H1 (cell line): ENCODE measurements at regions of chr1 and their contacts with region 1.

Region 1: DNA sequence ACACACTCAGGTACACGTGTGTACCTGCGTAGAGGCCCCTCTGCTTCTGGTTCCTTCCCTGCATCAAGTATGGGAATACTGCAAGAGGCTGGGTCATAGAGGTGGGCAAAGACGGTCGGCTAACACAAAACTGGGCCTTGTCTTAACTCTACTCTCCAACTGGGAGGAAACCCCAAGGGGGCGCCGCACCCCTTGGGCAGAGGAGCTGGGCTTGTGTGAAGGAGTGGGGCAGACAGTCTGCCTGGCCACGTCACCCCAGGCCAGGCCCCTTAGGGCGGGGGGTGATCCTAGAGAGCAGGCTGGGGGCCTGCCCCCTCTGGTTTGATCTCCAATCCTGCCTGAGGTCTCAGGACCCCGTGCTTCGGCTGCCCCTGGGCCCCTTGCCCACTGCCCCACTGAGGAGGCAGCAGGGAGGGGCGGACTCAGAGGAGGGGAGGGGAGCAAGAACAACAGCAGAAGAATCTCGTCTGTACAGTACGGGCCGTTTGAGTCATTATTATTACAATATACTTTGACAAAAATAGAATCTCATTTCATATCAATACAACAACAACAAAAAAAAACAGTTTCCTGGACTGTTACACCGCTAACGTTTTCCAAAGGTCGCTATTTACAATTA is 34.7 kb downstream of the MEF2D start:
- DNase-seq: peak in 1 of 2 experiments; percentile 73
- H3K4me3 ChIP-seq: no peak overlapping the region
- H3K27ac ChIP-seq: no peak overlapping the region
- H3K4me1 ChIP-seq: peaks cover 0 to 18% (median 8%) of the 10 kb centered on the region in 4 experiments; a peak in 5 of 7 replicates
- H3K27me3 ChIP-seq: no peaks in the 10 kb centered on the region; a peak in 1 of 7 replicates
- CTCF ChIP-seq: peak; percentile 66 to 68 (median 68)
- EP300 ChIP-seq: no peak
- POLR2A ChIP-seq: no peak
- RAD21 ChIP-seq: peak; percentile 66 to 78

Region 2: GRCh38 chr1:156489166-156489934 is 23.5 kb after region 1 on chr1:
- CTCF ChIA-PET with region 1: interaction called, 62 read pairs
- POLR2A ChIA-PET with region 1: interaction called, 5 read pairs
- DNase-seq: no peak
- H3K4me3 ChIP-seq: peak overlapping the region in 1 of 4 experiments; percentile 51; a peak in 2 of 8 replicates
- H3K27ac ChIP-seq: no peak overlapping the region
- H3K4me1 ChIP-seq: peaks cover 9 to 44% (median 28%) of the 10 kb centered on the region in 4 experiments
- H3K27me3 ChIP-seq: no peaks in the 10 kb centered on the region
- CTCF ChIP-seq: peak in 2 of 3 experiments; percentile 26 to 32; a peak in 2 of 4 replicates
- EP300 ChIP-seq: no peak
- POLR2A ChIP-seq: no peak
- RAD21 ChIP-seq: peak; percentile 18 to 31; a peak in 1 of 4 replicates